HCT116 (cell line): ENCODE measurements at regions of chr17 and their contacts with region 1.

Region 1: GRCh38 chr17:66975604-66976384 is 11.3 kb downstream of the CACNG4 start:
- DNase-seq: peak; percentile 48
- ATAC-seq: peak; percentile 94
- H3K4me3 ChIP-seq: no peak overlapping the region
- H3K27ac ChIP-seq: no peak overlapping the region
- H3K4me1 ChIP-seq: peaks cover 10 to 16% of the 10 kb centered on the region in 2 experiments; a peak in 2 of 4 replicates
- H3K27me3 ChIP-seq: no peaks in the 10 kb centered on the region
- CTCF ChIP-seq: peak; percentile 71 to 92 (median 86)
- POLR2A ChIP-seq: no peak
- RAD21 ChIP-seq: peak; percentile 98

Region 2: DNA sequence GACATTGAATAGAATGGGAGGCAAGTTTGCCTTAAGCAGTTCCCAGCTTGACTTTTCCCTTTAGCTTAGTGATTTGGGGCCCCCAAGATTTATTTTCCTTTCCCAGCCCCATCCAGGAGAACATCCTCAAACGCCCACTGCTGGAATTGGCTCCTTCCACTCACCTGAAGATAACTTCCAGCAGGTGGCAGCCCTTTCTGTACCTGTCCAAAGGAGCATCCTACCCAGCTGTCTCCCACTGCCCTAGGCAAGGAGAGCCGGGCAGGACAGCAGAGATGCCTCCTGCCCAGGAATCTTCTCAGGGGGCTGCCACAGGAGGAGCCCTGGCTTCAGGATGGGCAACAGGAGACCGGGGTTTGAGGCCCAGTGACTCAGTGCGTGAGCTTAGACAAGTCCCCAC is 134.5 kb before region 1 on chr17:
- CTCF ChIA-PET with region 1: interaction called, 9 read pairs
- POLR2A ChIA-PET with region 1: no interaction called
- RAD21 ChIA-PET with region 1: interaction called in 1 of 2 experiments, 4 read pairs
- intact Hi-C with region 1: loop called (anchors 1 kb)
- DNase-seq: no peak
- ATAC-seq: peak; percentile 79
- H3K4me3 ChIP-seq: no peak overlapping the region
- H3K27ac ChIP-seq: no peak overlapping the region
- H3K4me1 ChIP-seq: no peaks in the 10 kb centered on the region
- H3K27me3 ChIP-seq: peaks cover 12% of the 10 kb centered on the region; the same call in 1 of the 2 replicates
- CTCF ChIP-seq: peak; percentile 33 to 55 (median 52); a peak in 5 of 6 replicates
- POLR2A ChIP-seq: no peak
- RAD21 ChIP-seq: peak; percentile 51

Region 3: DNA sequence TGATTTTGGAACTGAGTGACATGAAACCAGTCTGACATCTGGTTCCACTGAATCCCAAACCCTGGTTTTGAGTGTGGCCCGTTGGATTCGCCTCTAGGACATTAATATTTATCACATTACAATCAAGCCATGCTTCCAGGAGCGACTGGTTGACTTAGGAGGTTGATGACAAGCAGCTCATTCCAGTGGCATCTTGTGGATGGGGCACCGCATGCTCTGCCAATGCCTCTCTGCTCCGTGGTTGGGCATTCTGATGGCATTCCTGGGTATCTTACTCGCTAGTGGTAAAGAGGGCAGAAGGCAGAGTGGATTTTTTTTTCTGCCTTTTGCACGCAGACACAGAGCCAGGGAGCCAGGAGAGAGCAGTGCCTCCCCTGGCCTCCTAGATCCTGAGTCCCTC is 20.1 kb after region 1 on chr17:
- CTCF ChIA-PET with region 1: no interaction called
- POLR2A ChIA-PET with region 1: no interaction called
- RAD21 ChIA-PET with region 1: no interaction called
- intact Hi-C with region 1: no loop called
- DNase-seq: no peak
- ATAC-seq: no peak
- H3K4me3 ChIP-seq: no peak overlapping the region
- H3K27ac ChIP-seq: no peak overlapping the region
- H3K4me1 ChIP-seq: no peaks in the 10 kb centered on the region
- H3K27me3 ChIP-seq: no peaks in the 10 kb centered on the region
- CTCF ChIP-seq: no peak
- POLR2A ChIP-seq: no peak
- RAD21 ChIP-seq: no peak